ENCODE measurements at regions of chr2 and their contacts with region 1.

Region 1: DNA sequence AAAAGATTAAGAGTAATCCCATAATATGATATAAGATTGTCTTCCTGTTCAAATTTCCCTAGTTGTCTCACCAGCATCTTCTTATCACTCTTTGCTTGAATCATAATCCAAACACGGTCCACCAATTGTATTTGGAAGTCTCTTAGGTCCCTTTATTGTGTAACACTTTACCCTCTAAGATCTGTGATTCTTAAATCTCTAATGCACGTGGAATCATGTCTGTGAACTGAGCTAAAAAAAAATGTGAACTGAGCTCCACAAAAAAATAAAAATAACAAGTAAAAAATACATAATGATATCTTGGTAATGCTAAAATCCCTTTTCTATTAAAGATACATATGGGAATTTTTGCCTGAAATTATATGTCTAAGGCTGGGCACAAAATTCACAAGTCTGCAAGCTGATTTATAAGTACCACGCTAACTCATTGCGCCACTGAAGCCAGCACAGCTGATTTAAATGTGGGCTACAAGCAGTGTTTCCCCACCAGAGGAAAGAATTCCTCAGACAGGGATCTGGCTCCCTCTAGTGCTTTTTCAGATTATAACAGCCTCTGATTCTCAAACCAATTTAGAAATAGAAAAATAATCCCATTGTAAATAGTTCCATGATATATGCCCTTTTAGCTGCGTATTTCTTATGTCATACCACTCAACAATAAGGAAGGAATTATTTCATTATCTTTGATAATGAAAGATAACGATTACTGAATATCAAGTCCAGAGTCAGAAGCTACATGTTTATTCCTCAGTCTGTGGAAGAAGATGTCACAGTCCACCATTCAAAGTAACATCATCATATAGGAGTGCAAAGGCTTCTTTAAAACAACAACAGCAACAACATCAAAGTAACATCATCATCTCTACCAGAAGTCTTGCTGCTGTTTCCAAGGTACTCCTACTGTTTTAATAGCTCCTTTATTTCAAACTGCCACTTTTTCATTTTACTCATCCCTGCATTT is 22.9 kb downstream of the RBM43 start:
- DNase-seq: peak; percentile 8
- ATAC-seq: peak; percentile 86
- H3K4me3 ChIP-seq: no peak overlapping the region
- H3K27ac ChIP-seq: no peak overlapping the region
- H3K4me1 ChIP-seq: no peaks in the 10 kb centered on the region
- H3K27me3 ChIP-seq: no peaks in the 10 kb centered on the region; a peak in 1 of 4 replicates
- CTCF ChIP-seq: peak; percentile 60 to 84 (median 75); a peak in 5 of 6 replicates
- EP300 ChIP-seq: no peak
- POLR2A ChIP-seq: no peak
- RAD21 ChIP-seq: peak; percentile 86

Region 2: GRCh38 chr2:151051574-151052220 is 187.1 kb before region 1 on chr2:
- CTCF ChIA-PET with region 1: interaction called, 4 read pairs
- POLR2A ChIA-PET with region 1: no interaction called
- RAD21 ChIA-PET with region 1: interaction called, 7 read pairs
- SMC1A ChIA-PET with region 1: interaction called, 3 read pairs
- in situ Hi-C with region 1: no loop called
- intact Hi-C with region 1: loop called (anchors 5 kb)
- DNase-seq: no peak
- ATAC-seq: peak; percentile 86
- H3K4me3 ChIP-seq: no peak overlapping the region
- H3K27ac ChIP-seq: no peak overlapping the region
- H3K4me1 ChIP-seq: no peaks in the 10 kb centered on the region
- H3K27me3 ChIP-seq: no peaks in the 10 kb centered on the region
- CTCF ChIP-seq: peak; percentile 67 to 81 (median 79)
- EP300 ChIP-seq: no peak
- POLR2A ChIP-seq: no peak
- RAD21 ChIP-seq: peak; percentile 72

Region 3: DNA sequence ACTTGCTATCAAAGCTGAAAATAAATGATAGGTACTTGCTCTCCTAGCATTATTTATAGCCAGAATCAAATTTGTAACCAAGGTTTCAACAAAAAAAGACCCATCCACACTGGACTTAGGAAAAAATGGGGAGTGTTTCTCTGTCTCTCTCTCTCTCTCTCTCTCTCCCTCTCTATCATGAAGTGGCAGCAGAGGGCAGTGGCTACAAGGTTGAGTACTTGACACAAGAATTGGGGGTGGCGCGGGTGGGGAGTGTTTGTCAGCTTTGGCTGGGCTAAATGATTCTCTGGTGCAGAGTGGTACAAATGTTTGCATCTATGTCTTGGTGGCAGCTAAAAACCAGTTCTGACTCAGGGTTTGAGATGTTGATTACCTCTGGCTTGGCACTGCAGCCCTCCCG is 62.1 kb before region 1 on chr2:
- CTCF ChIA-PET with region 1: interaction called, 14 read pairs
- POLR2A ChIA-PET with region 1: no interaction called
- RAD21 ChIA-PET with region 1: no interaction called
- SMC1A ChIA-PET with region 1: interaction called, 3 read pairs
- in situ Hi-C with region 1: no loop called
- intact Hi-C with region 1: no loop called
- DNase-seq: no peak
- ATAC-seq: no peak
- H3K4me3 ChIP-seq: no peak overlapping the region
- H3K27ac ChIP-seq: no peak overlapping the region
- H3K4me1 ChIP-seq: no peaks in the 10 kb centered on the region
- H3K27me3 ChIP-seq: no peaks in the 10 kb centered on the region; a peak in 1 of 4 replicates
- CTCF ChIP-seq: no peak
- EP300 ChIP-seq: no peak
- POLR2A ChIP-seq: no peak
- RAD21 ChIP-seq: no peak

Region 4: GRCh38 chr2:151251012-151251411 is 12.2 kb after region 1 on chr2:
- CTCF ChIA-PET with region 1: interaction called, 14 read pairs
- POLR2A ChIA-PET with region 1: no interaction called
- RAD21 ChIA-PET with region 1: interaction called, 6 read pairs
- SMC1A ChIA-PET with region 1: interaction called, 11 read pairs
- in situ Hi-C with region 1: no loop called
- intact Hi-C with region 1: no loop called
- DNase-seq: no peak
- ATAC-seq: no peak
- H3K4me3 ChIP-seq: no peak overlapping the region
- H3K27ac ChIP-seq: no peak overlapping the region
- H3K4me1 ChIP-seq: no peaks in the 10 kb centered on the region
- H3K27me3 ChIP-seq: no peaks in the 10 kb centered on the region
- CTCF ChIP-seq: no peak
- EP300 ChIP-seq: no peak
- POLR2A ChIP-seq: no peak
- RAD21 ChIP-seq: no peak

Measured in GM12878 (cell line).